Colonic mucosa (tissue), 4 donors: ENCODE measurements at regions of chr7 and their contacts with region 1.

Region 1: DNA sequence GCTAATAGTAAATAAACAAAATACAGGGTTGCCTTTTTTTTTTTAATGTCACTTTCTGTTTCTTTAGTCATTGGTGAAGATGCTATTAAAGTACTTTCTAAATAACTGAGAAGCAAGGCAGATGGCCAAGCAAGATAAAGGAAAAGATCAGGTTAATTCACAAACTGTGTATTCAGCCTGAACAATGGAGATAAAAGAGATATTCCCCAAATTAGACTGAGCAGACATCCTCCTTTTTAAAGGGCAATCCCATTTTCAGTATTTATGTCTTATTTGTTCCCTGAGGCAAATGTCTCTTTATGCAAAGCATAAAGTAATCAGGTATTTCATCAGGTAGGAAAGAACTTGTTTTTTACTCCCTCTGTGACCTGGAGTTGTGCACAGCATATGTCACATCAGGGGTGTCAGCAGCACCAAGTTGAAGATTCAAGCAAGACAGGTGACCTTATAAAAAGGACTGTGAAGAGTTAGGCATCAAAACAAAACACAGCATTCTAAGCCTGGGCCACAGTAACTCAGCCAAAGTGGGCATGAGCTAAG is 23.2 kb upstream of the XRCC2 start:
- DNase-seq: no peak
- H3K4me3 ChIP-seq: no peak overlapping the region
- H3K27ac ChIP-seq: no peak overlapping the region
- H3K4me1 ChIP-seq: no peaks in the 10 kb centered on the region
- H3K27me3 ChIP-seq: no peaks in the 10 kb centered on the region
- CTCF ChIP-seq: no peak

Region 2: GRCh38 chr7:152654971-152655370 is 44.2 kb before region 1 on chr7:
- intact Hi-C with region 1: loop called (anchors 5 kb)
- DNase-seq: no peak
- H3K4me3 ChIP-seq: no peak overlapping the region
- H3K27ac ChIP-seq: no peak overlapping the region
- H3K4me1 ChIP-seq: no peaks in the 10 kb centered on the region
- H3K27me3 ChIP-seq: no peaks in the 10 kb centered on the region
- CTCF ChIP-seq: no peak